ENCODE measurements at regions of chr2 and their contacts with region 1.

Region 1: DNA sequence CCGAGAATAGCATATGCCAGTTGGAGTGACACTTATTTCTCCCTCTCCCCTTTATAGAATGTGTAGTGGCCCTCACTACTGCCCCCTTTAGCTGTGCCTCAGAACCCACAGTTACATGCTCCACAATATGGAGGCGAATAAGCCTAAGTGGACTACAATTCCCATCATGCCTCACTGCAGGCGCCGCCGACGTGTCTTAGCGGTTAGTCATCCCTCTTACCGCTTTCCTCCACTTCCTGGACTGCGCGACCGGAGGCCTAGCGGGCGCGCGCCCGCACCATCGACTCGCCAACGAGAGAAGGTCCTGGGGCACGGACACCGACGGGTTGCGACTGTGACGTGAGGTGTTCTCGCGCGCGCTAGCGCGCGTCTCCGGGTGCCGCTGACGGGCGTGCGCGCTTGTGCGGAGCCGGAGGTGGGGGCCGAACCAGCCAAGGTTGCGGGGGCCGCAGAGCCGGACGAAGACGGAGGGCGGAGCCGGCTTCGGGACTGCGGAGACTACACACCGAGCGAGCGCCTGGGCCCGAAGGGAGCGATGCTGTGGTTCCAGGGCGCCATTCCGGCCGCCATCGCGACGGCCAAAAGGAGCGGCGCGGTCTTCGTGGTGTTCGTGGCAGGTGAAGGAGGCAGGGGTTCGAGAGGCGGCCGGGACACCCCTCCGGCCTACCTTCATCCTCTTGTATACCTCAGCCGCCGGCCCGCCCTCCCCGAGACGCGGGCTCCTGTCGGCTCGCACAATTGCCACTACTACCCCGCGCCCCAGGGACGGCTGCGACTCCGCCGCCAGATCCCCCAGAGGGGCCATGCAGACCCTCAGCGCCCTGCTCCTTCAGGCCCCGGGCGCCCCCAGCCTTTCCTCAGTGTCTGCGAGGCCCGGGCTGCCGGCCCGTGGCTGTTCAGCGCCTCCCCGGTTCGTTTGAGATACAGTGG is at the start of gene UBXN4:
- DNase-seq: peak; percentile 99
- H3K4me3 ChIP-seq: peak within 1 kb of the TSS; percentile 97
- H3K27ac ChIP-seq: peak within 1 kb of the TSS; percentile 96
- H3K4me1 ChIP-seq: peaks cover 17% of the 10 kb centered on the region
- H3K27me3 ChIP-seq: no peaks in the 10 kb centered on the region
- CTCF ChIP-seq: peak; percentile 69
- total RNA-seq, gene UBXN4: 117 and 123 TPM in 2 replicates

Region 2: DNA sequence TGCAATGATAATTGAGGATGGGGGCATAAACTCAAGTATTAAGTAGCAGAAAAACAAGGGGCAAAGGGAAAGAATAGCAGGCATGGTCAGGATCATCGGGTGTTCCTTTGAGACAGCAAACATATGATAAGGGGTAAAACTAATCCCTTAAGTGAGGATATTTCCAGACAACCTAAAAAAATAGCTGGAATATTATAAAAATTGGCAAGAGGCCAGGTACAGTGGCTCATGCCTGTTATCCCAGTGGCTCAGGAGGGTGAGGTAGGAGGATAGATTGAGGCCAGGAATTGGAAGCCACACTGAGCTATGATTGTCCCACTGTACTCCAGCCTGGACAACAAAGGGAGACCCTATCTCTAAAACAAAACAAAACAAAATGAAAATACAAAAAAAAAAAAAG is 349.7 kb before region 1 on chr2:
- CTCF ChIA-PET with region 1: no interaction called
- POLR2A ChIA-PET with region 1: interaction called, 10 read pairs
- intact Hi-C with region 1: no loop called
- DNase-seq: no peak
- H3K4me3 ChIP-seq: no peak overlapping the region
- H3K27ac ChIP-seq: no peak overlapping the region
- H3K4me1 ChIP-seq: no peaks in the 10 kb centered on the region
- H3K27me3 ChIP-seq: no peaks in the 10 kb centered on the region
- CTCF ChIP-seq: no peak

Region 3: GRCh38 chr2:135494503-135494902 is 247.2 kb before region 1 on chr2:
- CTCF ChIA-PET with region 1: no interaction called
- POLR2A ChIA-PET with region 1: interaction called, 14 read pairs
- intact Hi-C with region 1: no loop called
- DNase-seq: no peak
- H3K4me3 ChIP-seq: no peak overlapping the region
- H3K27ac ChIP-seq: no peak overlapping the region
- H3K4me1 ChIP-seq: no peaks in the 10 kb centered on the region
- H3K27me3 ChIP-seq: no peaks in the 10 kb centered on the region
- CTCF ChIP-seq: no peak

Region 4: GRCh38 chr2:135942936-135943688 is 201.5 kb after region 1 on chr2:
- CTCF ChIA-PET with region 1: no interaction called
- POLR2A ChIA-PET with region 1: no interaction called
- intact Hi-C with region 1: no loop called
- DNase-seq: no peak
- H3K4me3 ChIP-seq: no peak overlapping the region
- H3K27ac ChIP-seq: no peak overlapping the region
- H3K4me1 ChIP-seq: no peaks in the 10 kb centered on the region
- H3K27me3 ChIP-seq: no peaks in the 10 kb centered on the region
- CTCF ChIP-seq: no peak